K562 (cell line): ENCODE measurements at regions of chr17 and their contacts with region 1.

Region 1: GRCh38 chr17:48997083-48997826 is at the start of gene IGF2BP1:
- DNase-seq: peak; percentile 79 to 94 (median 85)
- ATAC-seq: peak; percentile 30
- H3K4me3 ChIP-seq: peak within 1 kb of the TSS; percentile 78
- H3K27ac ChIP-seq: peak within 1 kb of the TSS; percentile 97
- H3K4me1 ChIP-seq: peaks cover 7 to 12% of the 10 kb centered on the region in 2 experiments; a peak in 3 of 5 replicates
- H3K27me3 ChIP-seq: no peaks in the 10 kb centered on the region
- CTCF ChIP-seq: 0 out of 6 replicates have a peak, but pooled peaks of 1 of the 3 experiments have one; percentile 1
- EP300 ChIP-seq: no peak
- POLR2A ChIP-seq: peak; percentile 52
- RAD21 ChIP-seq: no peak
- polyA plus RNA-seq, gene IGF2BP1: 13.0 to 13.8 TPM

Region 2: DNA sequence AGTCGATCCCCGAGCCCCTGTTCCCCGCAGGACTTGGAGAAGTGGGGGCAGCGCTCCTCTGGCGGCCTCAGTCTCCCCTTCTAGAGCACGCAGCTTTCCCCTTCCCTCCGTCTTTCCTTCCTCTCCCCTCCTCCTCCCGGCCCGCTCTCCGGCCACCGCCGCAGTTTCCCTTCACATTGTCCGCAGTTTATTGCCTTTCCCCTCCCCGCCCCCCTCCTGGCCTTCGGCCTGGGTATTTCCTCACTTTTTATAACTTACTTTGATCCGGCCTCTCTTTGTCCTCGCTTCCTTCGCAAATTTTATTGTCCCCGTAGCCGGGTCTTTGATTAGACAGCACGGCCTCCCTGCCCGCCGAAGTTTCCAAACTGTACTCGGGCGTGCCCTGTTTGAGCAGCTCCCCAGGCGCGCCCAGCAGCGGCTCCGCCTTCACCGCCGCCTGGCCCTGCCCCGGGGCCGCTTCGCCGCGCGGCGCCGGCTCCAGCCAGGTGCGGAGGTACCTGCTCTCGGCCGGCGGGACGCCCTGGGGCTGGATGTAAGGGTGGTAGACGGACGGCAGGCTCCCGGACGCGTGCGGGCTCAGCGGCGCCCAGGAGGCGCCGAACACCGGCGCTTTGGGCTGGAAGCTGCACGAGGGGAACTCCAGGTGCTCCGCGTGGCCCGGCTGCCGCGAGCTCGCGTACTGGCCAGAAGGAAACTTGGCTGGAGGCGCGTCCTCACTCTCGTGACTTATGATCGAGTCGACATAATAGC is 371.6 kb before region 1 on chr17:
- CTCF ChIA-PET with region 1: no interaction called
- POLR2A ChIA-PET with region 1: no interaction called
- in situ Hi-C with region 1: no loop called
- intact Hi-C with region 1: loop called (anchors 5 kb)
- DNase-seq: peak; percentile 56 to 76 (median 67)
- ATAC-seq: peak; percentile 5
- H3K4me3 ChIP-seq: peak overlapping the region; percentile 97
- H3K27ac ChIP-seq: peak overlapping the region; percentile 99
- H3K4me1 ChIP-seq: peaks cover 41 to 57% of the 10 kb centered on the region in 2 experiments
- H3K27me3 ChIP-seq: no peaks in the 10 kb centered on the region
- CTCF ChIP-seq: no peak
- EP300 ChIP-seq: no peak
- POLR2A ChIP-seq: peak; percentile 67
- RAD21 ChIP-seq: no peak

Region 3: DNA sequence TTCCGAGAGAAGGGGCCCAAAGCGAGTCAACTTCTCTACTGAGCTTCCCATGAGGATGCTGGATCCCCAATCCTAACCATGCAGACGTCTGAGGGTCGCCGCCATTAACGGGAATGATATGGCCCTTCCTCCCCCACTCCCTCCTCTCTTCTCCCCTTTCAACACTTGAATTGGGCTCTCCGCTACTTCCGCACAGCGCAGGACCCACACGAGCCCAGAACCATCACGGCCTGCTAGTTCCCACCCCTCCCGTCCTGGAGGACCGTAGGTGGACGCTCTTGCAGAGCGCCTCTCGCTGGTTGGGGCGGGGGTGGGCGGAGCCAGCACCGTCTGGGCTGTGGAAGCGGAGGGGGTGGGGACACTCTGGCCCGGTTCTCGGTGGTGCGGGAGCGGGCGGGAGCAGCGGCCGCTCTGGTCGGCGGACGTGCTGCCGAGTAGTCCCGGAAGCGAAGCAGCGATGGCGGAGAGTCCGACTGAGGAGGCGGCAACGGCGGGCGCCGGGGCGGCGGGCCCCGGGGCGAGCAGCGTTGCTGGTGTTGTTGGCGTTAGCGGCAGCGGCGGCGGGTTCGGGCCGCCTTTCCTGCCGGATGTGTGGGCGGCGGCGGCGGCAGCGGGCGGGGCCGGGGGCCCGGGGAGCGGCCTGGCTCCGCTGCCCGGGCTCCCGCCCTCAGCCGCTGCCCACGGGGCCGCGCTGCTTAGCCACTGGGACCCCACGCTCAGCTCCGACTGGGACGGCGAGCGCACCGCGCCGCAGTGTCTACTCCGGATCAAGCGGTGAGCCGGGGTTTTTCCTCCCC is 89.0 kb before region 1 on chr17 and contains the start of gene UBE2Z:
- CTCF ChIA-PET with region 1: no interaction called
- POLR2A ChIA-PET with region 1: no interaction called
- in situ Hi-C with region 1: no loop called
- intact Hi-C with region 1: loop called (anchors 5 kb)
- DNase-seq: peak; percentile 95 to 98 (median 96)
- ATAC-seq: peak; percentile 94
- H3K4me3 ChIP-seq: peak within 1 kb of the TSS; percentile 88
- H3K27ac ChIP-seq: peak within 1 kb of the TSS; percentile 91
- H3K4me1 ChIP-seq: peaks cover 8 to 12% of the 10 kb centered on the region in 2 experiments; a peak in 4 of 5 replicates
- H3K27me3 ChIP-seq: no peaks in the 10 kb centered on the region
- CTCF ChIP-seq: peak; percentile 43 to 51 (median 43); a peak in 4 of 6 replicates
- EP300 ChIP-seq: no peak
- POLR2A ChIP-seq: peak; percentile 92
- RAD21 ChIP-seq: no peak
- polyA plus RNA-seq, gene UBE2Z: 11.8 to 15.0 TPM

Region 4: GRCh38 chr17:48954300-48954755 is 42.9 kb before region 1 on chr17:
- CTCF ChIA-PET with region 1: interaction called, 4 read pairs
- POLR2A ChIA-PET with region 1: interaction called, 3 read pairs
- in situ Hi-C with region 1: no loop called
- intact Hi-C with region 1: loop called (anchors 2 kb)
- DNase-seq: peak; percentile 46 to 83 (median 62)
- ATAC-seq: peak; percentile 98
- H3K4me3 ChIP-seq: no peak overlapping the region
- H3K27ac ChIP-seq: no peak overlapping the region
- H3K4me1 ChIP-seq: peaks cover 0 to 3% of the 10 kb centered on the region in 2 experiments; a peak in 2 of 5 replicates
- H3K27me3 ChIP-seq: no peaks in the 10 kb centered on the region
- CTCF ChIP-seq: peak; percentile 89 to 95 (median 90)
- EP300 ChIP-seq: no peak
- POLR2A ChIP-seq: no peak
- RAD21 ChIP-seq: peak; percentile 95 to 99

Region 5: DNA sequence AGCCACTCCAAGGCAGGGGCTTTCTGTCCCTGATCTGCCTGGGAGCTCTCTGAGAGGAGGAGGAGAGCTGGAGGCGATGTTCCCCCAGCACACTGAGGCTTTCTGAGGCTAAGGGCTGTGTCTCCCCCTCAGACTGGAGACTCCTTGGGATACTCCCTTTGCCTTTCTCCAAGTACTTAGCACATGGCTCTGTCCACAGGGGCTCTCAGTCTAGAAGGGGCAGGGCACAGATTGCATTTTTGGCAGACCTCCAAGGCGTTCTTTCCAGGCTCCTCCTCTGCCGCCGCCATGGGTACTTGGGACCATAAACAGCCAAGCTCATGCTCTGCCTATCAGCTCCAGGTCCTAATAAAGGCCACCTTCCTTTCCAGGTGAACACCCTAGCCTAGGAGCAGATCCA is 27.0 kb before region 1 on chr17:
- CTCF ChIA-PET with region 1: no interaction called
- POLR2A ChIA-PET with region 1: interaction called, 7 read pairs
- in situ Hi-C with region 1: no loop called
- intact Hi-C with region 1: loop called (anchors 2 kb)
- DNase-seq: peak; percentile 42 to 78 (median 54)
- ATAC-seq: peak; percentile 64
- H3K4me3 ChIP-seq: no peak overlapping the region
- H3K27ac ChIP-seq: 0 out of 3 replicates have a peak overlapping the region, but pooled peaks have one; percentile 22
- H3K4me1 ChIP-seq: peaks cover 34 to 37% of the 10 kb centered on the region in 2 experiments
- H3K27me3 ChIP-seq: no peaks in the 10 kb centered on the region
- CTCF ChIP-seq: no peak
- EP300 ChIP-seq: no peak
- POLR2A ChIP-seq: no peak
- RAD21 ChIP-seq: no peak

Region 6: GRCh38 chr17:49016788-49017463 is 19.7 kb after region 1 on chr17:
- CTCF ChIA-PET with region 1: no interaction called
- POLR2A ChIA-PET with region 1: interaction called, 14 read pairs
- in situ Hi-C with region 1: no loop called
- intact Hi-C with region 1: no loop called
- DNase-seq: no peak
- ATAC-seq: no peak
- H3K4me3 ChIP-seq: no peak overlapping the region
- H3K27ac ChIP-seq: no peak overlapping the region
- H3K4me1 ChIP-seq: peaks cover 7 to 28% of the 10 kb centered on the region in 2 experiments; a peak in 4 of 5 replicates
- H3K27me3 ChIP-seq: no peaks in the 10 kb centered on the region
- CTCF ChIP-seq: no peak
- EP300 ChIP-seq: no peak
- POLR2A ChIP-seq: no peak
- RAD21 ChIP-seq: no peak

Region 7: DNA sequence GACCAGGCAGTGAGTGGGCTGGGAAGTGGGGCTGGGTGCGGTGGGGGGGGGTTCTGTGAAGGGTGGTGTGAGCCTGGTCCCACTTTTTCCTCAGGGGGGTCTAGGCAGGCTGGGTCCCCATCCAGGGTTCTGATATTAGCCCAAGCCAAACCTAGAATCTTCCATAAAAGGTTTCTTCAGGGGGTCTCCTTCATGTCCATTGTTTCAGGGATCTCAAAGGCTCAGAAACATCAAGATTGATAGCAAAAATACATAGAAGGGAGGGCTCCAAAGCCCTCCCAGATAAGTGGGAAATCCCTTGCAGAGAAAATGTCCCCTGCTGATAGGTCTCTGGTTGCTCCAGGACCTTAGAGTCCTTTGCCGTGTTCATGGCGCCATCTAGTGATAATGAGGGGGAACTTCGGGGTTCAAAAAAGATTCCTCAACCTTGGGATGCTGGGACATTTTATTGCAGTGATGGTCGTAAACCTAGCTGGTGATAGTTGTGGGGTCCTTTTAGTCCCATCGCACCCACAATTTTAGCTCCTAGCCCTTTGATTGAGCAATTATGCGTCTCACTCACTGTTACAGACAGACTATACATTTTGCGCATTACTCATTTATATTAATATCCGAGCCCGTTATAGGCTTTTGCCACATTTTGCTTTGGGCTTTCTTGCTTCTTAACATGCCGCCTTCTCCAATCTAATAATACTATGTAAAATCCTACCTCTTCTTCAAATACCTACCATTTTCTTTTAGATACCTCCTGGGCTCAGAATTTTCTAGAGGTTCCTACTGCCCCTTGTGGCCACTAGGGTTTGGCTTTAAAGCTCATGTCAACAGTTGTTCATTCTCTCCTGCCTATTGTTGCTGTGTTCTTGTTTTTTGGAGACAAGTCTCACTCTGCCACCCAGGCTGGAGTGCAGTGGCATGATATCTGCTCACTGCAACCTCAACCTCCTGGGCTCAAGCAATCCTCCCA is 35.0 kb after region 1 on chr17:
- CTCF ChIA-PET with region 1: interaction called, 3 read pairs
- POLR2A ChIA-PET with region 1: interaction called, 3 read pairs
- in situ Hi-C with region 1: no loop called
- intact Hi-C with region 1: loop called (anchors 5 kb)
- DNase-seq: peak; percentile 71 to 85 (median 79)
- ATAC-seq: peak; percentile 91
- H3K4me3 ChIP-seq: no peak overlapping the region
- H3K27ac ChIP-seq: no peak overlapping the region
- H3K4me1 ChIP-seq: peaks cover 2 to 13% of the 10 kb centered on the region in 2 experiments; a peak in 4 of 5 replicates
- H3K27me3 ChIP-seq: no peaks in the 10 kb centered on the region
- CTCF ChIP-seq: peak; percentile 79 to 95 (median 85)
- EP300 ChIP-seq: no peak
- POLR2A ChIP-seq: no peak
- RAD21 ChIP-seq: peak; percentile 90 to 94

Region 8: DNA sequence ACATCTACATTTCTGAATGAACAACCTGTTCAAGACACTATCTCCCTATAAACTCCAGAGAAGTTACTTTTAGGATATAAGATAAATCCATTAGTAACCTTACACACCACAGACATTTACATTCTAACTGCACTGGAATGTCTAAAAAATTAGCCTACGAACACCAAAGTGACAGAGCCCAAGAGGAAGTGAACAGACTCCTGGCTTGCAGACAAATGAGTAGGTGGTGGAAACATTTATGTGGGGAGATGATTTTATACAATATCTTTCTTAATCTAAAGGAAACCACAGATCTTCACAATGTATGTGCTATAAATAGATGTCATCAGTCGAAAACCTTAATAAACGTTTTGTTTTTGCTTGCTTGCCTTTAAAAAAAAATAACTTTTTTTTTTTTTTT is 346.0 kb after region 1 on chr17:
- CTCF ChIA-PET with region 1: no interaction called
- POLR2A ChIA-PET with region 1: no interaction called
- in situ Hi-C with region 1: no loop called
- intact Hi-C with region 1: no loop called
- DNase-seq: no peak
- ATAC-seq: no peak
- H3K4me3 ChIP-seq: no peak overlapping the region
- H3K27ac ChIP-seq: no peak overlapping the region; the same call in 2 of the 3 replicates
- H3K4me1 ChIP-seq: peaks cover 7 to 22% of the 10 kb centered on the region in 2 experiments; a peak in 4 of 5 replicates
- H3K27me3 ChIP-seq: no peaks in the 10 kb centered on the region
- CTCF ChIP-seq: no peak
- EP300 ChIP-seq: no peak
- POLR2A ChIP-seq: no peak
- RAD21 ChIP-seq: no peak